Activated CD8-positive, alpha-beta memory T cell treated with anti-CD3 and anti-CD28 coated beads, Interleukin-2, amount 10 ng/mL, durations not matched to agents 7 days and 5 days (primary cell): ENCODE measurements at regions of chr1 and their contacts with region 1.

Region 1: GRCh38 chr1:204565617-204566582 is 49.7 kb downstream of the MDM4 start:
- DNase-seq: peak; percentile 80
- ATAC-seq: peak; percentile 86
- H3K4me3 Mint-ChIP-seq: no peak overlapping the region
- H3K27ac Mint-ChIP-seq: peak overlapping the region; percentile 72
- H3K4me1 Mint-ChIP-seq: peaks cover 48% of the 10 kb centered on the region
- H3K27me3 Mint-ChIP-seq: no peaks in the 10 kb centered on the region

Region 2: DNA sequence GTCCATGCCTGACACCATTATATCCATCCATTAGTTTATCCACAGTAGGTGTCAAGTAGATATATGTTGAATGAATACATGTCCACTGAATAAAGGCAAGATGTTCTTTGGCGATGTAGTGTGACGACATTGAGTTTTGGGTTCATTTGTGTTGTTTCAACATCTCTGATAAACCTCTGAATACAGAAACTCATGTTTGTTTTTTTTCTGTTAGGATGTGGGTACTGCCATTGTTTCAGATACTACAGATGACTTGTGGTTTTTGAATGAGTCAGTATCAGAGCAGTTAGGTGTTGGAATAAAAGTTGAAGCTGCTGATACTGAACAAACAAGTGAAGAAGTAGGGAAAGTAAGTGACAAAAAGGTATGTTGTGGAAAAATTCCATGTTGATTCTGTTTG is 21.6 kb before region 1 on chr1:
- CTCF ChIA-PET with region 1: interaction called, 11 read pairs
- DNase-seq: no peak
- ATAC-seq: peak; percentile 96
- H3K4me3 Mint-ChIP-seq: peak overlapping the region; percentile 16
- H3K27ac Mint-ChIP-seq: peak overlapping the region; percentile 81
- H3K4me1 Mint-ChIP-seq: peaks cover 46% of the 10 kb centered on the region
- H3K27me3 Mint-ChIP-seq: no peaks in the 10 kb centered on the region

Region 3: GRCh38 chr1:204578867-204579664 is 13.2 kb after region 1 on chr1:
- CTCF ChIA-PET with region 1: interaction called, 21 read pairs
- DNase-seq: peak; percentile 68
- ATAC-seq: peak; percentile 79
- H3K4me3 Mint-ChIP-seq: peak overlapping the region; percentile 69
- H3K27ac Mint-ChIP-seq: peak overlapping the region; percentile 86
- H3K4me1 Mint-ChIP-seq: peaks cover 23% of the 10 kb centered on the region
- H3K27me3 Mint-ChIP-seq: no peaks in the 10 kb centered on the region

Region 4: DNA sequence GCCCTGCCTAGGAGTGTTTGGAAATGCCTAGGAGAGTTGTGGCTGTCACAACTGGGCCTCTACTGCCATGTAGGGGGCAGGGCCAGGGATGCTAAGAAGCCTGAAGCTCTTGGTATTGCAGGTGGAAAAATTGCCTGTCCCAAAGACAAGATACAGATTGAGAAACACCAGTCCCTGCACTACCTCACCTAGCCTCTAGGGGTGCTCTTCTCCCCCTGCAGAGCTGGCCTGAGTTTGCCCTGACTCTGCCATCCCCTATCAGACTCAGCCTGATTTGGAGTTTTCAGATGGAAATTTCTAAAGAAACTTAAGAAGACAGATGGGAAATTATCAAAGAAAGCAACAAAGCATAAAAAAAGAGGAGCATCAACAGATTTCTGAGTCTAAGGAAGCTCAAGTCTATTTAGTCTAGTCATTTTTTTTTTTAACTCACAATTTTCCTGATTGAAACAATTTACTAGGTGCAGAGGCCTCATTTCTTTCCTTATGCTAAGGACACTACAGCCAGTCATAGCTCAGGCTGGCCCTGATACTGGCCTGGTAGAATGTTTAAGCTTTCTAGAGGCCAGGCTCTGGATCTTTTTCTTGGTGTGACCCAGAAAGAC is 181.0 kb after region 1 on chr1:
- CTCF ChIA-PET with region 1: interaction called, 11 read pairs
- DNase-seq: peak; percentile 56
- ATAC-seq: peak; percentile 78
- H3K4me3 Mint-ChIP-seq: no peak overlapping the region
- H3K27ac Mint-ChIP-seq: no peak overlapping the region
- H3K4me1 Mint-ChIP-seq: no peaks in the 10 kb centered on the region
- H3K27me3 Mint-ChIP-seq: peaks cover 32% of the 10 kb centered on the region

Region 5: DNA sequence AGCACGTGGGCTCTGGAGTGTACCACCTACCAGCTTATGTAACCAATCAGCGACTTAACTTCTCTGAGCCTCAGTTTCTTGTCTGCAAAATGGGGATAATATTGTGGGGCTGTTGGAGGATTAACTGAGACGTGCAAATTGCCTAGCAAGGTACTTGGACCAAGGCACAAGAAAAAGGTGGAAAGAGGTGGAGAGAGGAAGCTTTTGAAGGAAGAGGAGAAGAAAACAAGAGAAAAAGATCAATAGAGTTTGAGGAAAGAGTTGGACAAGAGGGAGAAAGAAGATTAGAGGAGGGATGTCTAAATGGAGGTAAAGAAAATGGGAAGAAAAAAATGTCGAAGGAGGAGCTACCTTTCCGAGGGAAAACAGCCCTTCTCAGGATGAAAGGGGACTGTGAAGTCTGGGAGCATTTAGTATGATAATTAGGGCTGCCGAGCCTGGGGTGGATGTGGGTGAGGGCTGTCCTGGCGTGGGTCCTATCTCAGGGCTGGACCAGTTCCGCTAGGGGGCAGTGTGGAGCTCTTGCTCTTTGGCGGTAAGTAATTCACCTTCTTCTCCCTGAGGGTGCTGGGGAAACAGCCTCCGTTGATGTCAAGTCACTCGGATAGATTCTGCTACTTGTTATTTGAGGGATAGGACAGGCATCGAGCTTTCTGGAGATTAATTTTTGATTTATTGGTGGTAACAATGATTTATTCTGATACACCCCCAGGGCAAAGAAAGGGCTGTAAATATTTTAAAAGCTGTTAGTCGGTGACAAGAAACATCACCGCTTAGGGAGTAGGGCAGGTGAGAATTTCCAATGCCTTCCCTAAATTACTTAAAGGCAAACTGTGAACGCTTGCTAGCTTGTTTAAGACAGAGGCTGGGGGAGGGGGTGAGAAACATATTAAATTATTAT is 225.8 kb after region 1 on chr1:
- CTCF ChIA-PET with region 1: interaction called, 19 read pairs
- DNase-seq: peak; percentile 85
- ATAC-seq: peak; percentile 67
- H3K4me3 Mint-ChIP-seq: no peak overlapping the region
- H3K27ac Mint-ChIP-seq: no peak overlapping the region
- H3K4me1 Mint-ChIP-seq: no peaks in the 10 kb centered on the region
- H3K27me3 Mint-ChIP-seq: peaks cover 42% of the 10 kb centered on the region